CD8-positive, alpha-beta memory T cell (primary cell): ENCODE measurements at regions of chr10 and their contacts with region 1.

Region 1: GRCh38 chr10:26437637-26438461 is at the start of gene APBB1IP:
- DNase-seq: peak in 4 of 5 donors; percentile 30 to 65 (median 48)
- H3K4me3 ChIP-seq: peak within 1 kb of the TSS; percentile 84
- H3K4me3 Mint-ChIP-seq: peak within 1 kb of the TSS; percentile 91 to 99 (median 98)
- H3K27ac ChIP-seq: peak within 1 kb of the TSS; percentile 86
- H3K27ac Mint-ChIP-seq: peak within 1 kb of the TSS; percentile 91 to 99 (median 98)
- H3K4me1 ChIP-seq: peaks cover 42% of the 10 kb centered on the region
- H3K4me1 Mint-ChIP-seq: peaks cover 46 to 62% (median 60%) of the 10 kb centered on the region in 3 donors
- H3K27me3 ChIP-seq: no peaks in the 10 kb centered on the region
- H3K27me3 Mint-ChIP-seq: no peaks in the 10 kb centered on the region
- total RNA-seq, gene APBB1IP: 47.7 to 48.9 TPM

Region 2: GRCh38 chr10:26407406-26408279 is 30.2 kb before region 1 on chr10:
- CTCF ChIA-PET with region 1: no interaction called
- POLR2A ChIA-PET with region 1: no interaction called
- DNase-seq: no peak
- H3K4me3 ChIP-seq: no peak overlapping the region
- H3K4me3 Mint-ChIP-seq: no peak overlapping the region
- H3K27ac ChIP-seq: no peak overlapping the region
- H3K27ac Mint-ChIP-seq: no peak overlapping the region
- H3K4me1 ChIP-seq: no peaks in the 10 kb centered on the region
- H3K4me1 Mint-ChIP-seq: peaks cover 0 to 5% (median 0%) of the 10 kb centered on the region in 3 donors
- H3K27me3 ChIP-seq: no peaks in the 10 kb centered on the region
- H3K27me3 Mint-ChIP-seq: peaks cover 5 to 7% of the 10 kb centered on the region in 2 donors

Region 3: DNA sequence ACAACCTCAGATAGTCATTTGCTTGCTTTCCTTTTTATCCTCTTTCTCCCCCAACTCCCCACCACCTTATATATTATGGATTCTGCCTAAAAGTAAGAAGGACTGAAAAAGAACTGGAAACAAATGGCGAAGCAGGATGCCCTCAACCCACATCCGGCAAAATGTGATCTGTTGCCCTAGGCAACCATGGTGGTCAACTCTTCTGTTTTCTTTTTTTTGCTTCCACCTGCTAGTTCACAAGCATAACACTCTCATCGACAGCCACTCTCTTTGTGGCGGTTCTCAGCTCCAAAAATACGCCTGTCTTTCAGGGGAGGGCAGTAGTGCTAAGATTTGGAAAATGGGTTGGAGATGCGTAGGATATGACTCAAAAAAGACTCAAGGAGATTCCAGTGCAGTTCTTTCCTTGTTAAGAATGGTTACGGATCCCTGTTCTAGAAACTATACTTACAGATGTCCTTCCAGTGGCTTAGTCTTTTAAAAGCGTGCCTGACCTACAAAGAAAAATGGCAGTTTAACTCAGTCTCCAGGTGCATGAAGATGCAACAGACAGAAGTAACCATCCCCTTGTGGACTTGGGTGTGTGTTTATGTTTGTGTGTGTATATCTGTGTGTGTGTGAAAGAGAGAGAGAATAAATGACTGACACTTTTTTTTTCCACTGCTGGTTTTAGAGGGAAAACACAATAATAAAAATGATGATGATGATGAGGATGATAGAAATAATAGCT is 11.0 kb after region 1 on chr10:
- CTCF ChIA-PET with region 1: no interaction called
- POLR2A ChIA-PET with region 1: interaction called, 16 read pairs
- DNase-seq: peak; percentile 59 to 92 (median 88)
- H3K4me3 ChIP-seq: peak overlapping the region; percentile 57
- H3K4me3 Mint-ChIP-seq: peak overlapping the region; percentile 72 to 89 (median 79)
- H3K27ac ChIP-seq: peak overlapping the region; percentile 81
- H3K27ac Mint-ChIP-seq: peak overlapping the region; percentile 91 to 100 (median 99)
- H3K4me1 ChIP-seq: peaks cover 88% of the 10 kb centered on the region
- H3K4me1 Mint-ChIP-seq: peaks cover 85 to 97% (median 95%) of the 10 kb centered on the region in 3 donors
- H3K27me3 ChIP-seq: no peaks in the 10 kb centered on the region
- H3K27me3 Mint-ChIP-seq: peaks cover 0 to 6% of the 10 kb centered on the region in 2 donors

Region 4: GRCh38 chr10:26457088-26457487 is 19.2 kb after region 1 on chr10:
- CTCF ChIA-PET with region 1: interaction called, 3 read pairs
- POLR2A ChIA-PET with region 1: interaction called, 11 read pairs
- DNase-seq: no peak
- H3K4me3 ChIP-seq: no peak overlapping the region
- H3K4me3 Mint-ChIP-seq: peak overlapping the region in 5 of 7 donors; percentile 1 to 63 (median 27)
- H3K27ac ChIP-seq: no peak overlapping the region
- H3K27ac Mint-ChIP-seq: peak overlapping the region; percentile 67 to 91 (median 77)
- H3K4me1 ChIP-seq: peaks cover 61% of the 10 kb centered on the region
- H3K4me1 Mint-ChIP-seq: peaks cover 74 to 82% (median 80%) of the 10 kb centered on the region in 3 donors
- H3K27me3 ChIP-seq: no peaks in the 10 kb centered on the region
- H3K27me3 Mint-ChIP-seq: no peaks in the 10 kb centered on the region

Region 5: GRCh38 chr10:26486991-26487850 is 49.4 kb after region 1 on chr10:
- CTCF ChIA-PET with region 1: interaction called, 5 read pairs
- POLR2A ChIA-PET with region 1: interaction called, 10 read pairs
- DNase-seq: peak; percentile 38 to 82 (median 61)
- H3K4me3 ChIP-seq: peak overlapping the region; percentile 35
- H3K4me3 Mint-ChIP-seq: peak overlapping the region; percentile 31 to 77 (median 60)
- H3K27ac ChIP-seq: peak overlapping the region; percentile 72
- H3K27ac Mint-ChIP-seq: peak overlapping the region; percentile 87 to 97 (median 92)
- H3K4me1 ChIP-seq: peaks cover 66% of the 10 kb centered on the region
- H3K4me1 Mint-ChIP-seq: peaks cover 60 to 83% (median 73%) of the 10 kb centered on the region in 3 donors
- H3K27me3 ChIP-seq: no peaks in the 10 kb centered on the region
- H3K27me3 Mint-ChIP-seq: no peaks in the 10 kb centered on the region